Right cardiac atrium (tissue), 5 donors: ENCODE measurements at regions of chr22 and their contacts with region 1.

Region 1: GRCh38 chr22:50627642-50628542 is at the start of gene ARSA:
- DNase-seq: peak; percentile 87 to 94 (median 93)
- ATAC-seq: peak; percentile 86 to 92
- H3K4me3 ChIP-seq: peak within 1 kb of the TSS; percentile 64
- H3K27ac ChIP-seq: peak within 1 kb of the TSS; percentile 42
- H3K4me1 ChIP-seq: peaks cover 6% of the 10 kb centered on the region
- H3K27me3 ChIP-seq: no peaks in the 10 kb centered on the region
- total RNA-seq, gene ARSA: 30.3 to 37.0 (median 32.2) TPM

Region 2: GRCh38 chr22:50696797-50697561 is 69.1 kb after region 1 on chr22:
- intact Hi-C with region 1: loop called in 1 of 4 experiments (anchors 5 kb)
- DNase-seq: peak; percentile 41 to 76 (median 75)
- ATAC-seq: peak; percentile 40 to 59
- H3K4me3 ChIP-seq: peak overlapping the region; percentile 46
- H3K27ac ChIP-seq: no peak overlapping the region
- H3K4me1 ChIP-seq: peaks cover 3% of the 10 kb centered on the region
- H3K27me3 ChIP-seq: no peaks in the 10 kb centered on the region